Sigmoid colon (tissue), 7 donors: ENCODE measurements at regions of chr4 and their contacts with region 1.

Region 1: GRCh38 chr4:109702950-109703663 is at the start of gene CASP6:
- DNase-seq: peak; percentile 91
- H3K4me3 ChIP-seq: peak within 1 kb of the TSS; percentile 61 to 86 (median 74)
- H3K27ac ChIP-seq: peak within 1 kb of the TSS; percentile 85 to 90 (median 89)
- H3K4me1 ChIP-seq: peaks cover 0 to 20% (median 16%) of the 10 kb centered on the region in 4 donors
- H3K27me3 ChIP-seq: no peaks in the 10 kb centered on the region
- CTCF ChIP-seq: peak; percentile 35 to 78 (median 70)
- EP300 ChIP-seq: no peak
- POLR2A ChIP-seq: peak in 1 of 2 donors; percentile 55
- total RNA-seq, gene CASP6: 18.2 to 41.3 (median 26.8) TPM

Region 2: DNA sequence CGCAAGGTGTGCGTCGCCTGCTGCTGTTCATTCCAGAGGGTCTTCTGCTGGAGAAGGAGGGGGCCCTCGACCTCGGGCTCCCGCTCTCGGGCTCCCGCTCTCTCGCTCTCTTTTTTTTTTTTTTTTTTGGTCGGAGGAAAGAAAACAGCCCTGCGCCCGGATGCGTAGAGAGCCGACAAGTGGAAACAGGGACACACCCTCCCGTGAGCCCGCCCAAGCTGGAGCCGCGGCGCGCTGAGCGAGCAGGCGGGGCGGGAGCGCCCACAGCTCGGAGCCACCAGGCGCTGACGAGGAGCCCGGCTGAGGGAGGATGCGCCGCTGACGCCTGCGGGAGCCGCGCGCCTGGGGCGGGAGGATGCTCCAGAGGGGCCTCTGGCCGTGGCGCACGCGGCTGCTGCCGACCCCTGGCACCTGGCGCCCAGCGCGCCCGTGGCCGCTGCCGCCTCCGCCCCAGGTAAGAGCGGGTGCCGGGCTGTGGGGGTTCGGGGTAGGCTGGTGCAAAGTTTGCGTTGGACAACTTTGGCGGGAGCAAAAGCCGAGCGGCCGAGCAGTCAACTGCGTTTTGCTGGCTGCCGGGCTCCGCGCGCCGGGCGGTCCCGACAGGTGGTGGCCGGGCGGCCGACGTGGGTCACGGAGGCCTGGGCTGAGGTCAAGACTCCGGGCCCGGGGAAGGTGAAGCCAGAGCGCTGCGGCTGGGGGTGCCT is 143.0 kb before region 1 on chr4 and contains the start of gene MCUB:
- intact Hi-C with region 1: loop called (anchors 10 kb)
- DNase-seq: peak; percentile 93
- H3K4me3 ChIP-seq: peak within 1 kb of the TSS; percentile 51 to 81 (median 67)
- H3K27ac ChIP-seq: peak within 1 kb of the TSS; percentile 68 to 93 (median 84)
- H3K4me1 ChIP-seq: peaks cover 0 to 23% (median 17%) of the 10 kb centered on the region in 4 donors
- H3K27me3 ChIP-seq: no peaks in the 10 kb centered on the region
- CTCF ChIP-seq: no peak
- EP300 ChIP-seq: no peak
- POLR2A ChIP-seq: no peak
- total RNA-seq, gene MCUB: 5.0 to 10.9 (median 8.8) TPM

Region 3: DNA sequence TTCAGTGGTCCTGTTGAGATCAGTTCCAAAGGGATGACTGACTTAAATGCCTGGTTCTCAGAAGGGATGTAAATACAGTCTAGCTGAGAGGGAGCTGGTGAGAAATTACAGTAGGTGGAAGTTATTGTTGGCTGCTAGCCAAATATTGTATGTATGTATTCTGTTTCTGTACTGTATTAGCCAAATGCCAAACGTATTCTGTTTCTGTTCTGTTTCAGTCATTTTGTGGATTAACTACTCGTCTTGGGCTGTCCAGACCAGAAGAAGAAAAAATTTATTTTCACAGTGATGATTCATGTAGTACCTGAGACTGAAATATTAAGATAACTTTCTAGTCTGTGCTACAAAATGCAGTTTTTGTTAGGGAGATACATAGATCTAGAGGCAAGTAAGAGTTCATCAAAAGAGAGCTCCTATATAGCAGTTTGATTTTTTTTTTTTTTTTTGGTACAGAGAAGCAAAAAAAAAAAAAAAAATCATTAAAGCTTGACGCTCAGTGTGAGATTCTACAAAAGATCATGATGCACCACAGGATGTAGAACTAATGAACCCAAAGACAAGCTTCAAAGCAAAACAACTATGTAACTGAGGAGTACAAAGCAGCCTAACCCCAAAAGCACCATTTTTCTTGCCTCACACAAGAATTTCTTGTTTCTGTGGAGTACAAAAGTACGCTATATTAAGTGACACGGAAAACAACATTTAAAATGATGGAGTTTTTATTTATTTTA is 54.7 kb before region 1 on chr4:
- intact Hi-C with region 1: no loop called
- DNase-seq: no peak
- H3K4me3 ChIP-seq: no peak overlapping the region
- H3K27ac ChIP-seq: no peak overlapping the region
- H3K4me1 ChIP-seq: no peaks in the 10 kb centered on the region
- H3K27me3 ChIP-seq: no peaks in the 10 kb centered on the region
- CTCF ChIP-seq: no peak
- EP300 ChIP-seq: no peak
- POLR2A ChIP-seq: no peak

Region 4: DNA sequence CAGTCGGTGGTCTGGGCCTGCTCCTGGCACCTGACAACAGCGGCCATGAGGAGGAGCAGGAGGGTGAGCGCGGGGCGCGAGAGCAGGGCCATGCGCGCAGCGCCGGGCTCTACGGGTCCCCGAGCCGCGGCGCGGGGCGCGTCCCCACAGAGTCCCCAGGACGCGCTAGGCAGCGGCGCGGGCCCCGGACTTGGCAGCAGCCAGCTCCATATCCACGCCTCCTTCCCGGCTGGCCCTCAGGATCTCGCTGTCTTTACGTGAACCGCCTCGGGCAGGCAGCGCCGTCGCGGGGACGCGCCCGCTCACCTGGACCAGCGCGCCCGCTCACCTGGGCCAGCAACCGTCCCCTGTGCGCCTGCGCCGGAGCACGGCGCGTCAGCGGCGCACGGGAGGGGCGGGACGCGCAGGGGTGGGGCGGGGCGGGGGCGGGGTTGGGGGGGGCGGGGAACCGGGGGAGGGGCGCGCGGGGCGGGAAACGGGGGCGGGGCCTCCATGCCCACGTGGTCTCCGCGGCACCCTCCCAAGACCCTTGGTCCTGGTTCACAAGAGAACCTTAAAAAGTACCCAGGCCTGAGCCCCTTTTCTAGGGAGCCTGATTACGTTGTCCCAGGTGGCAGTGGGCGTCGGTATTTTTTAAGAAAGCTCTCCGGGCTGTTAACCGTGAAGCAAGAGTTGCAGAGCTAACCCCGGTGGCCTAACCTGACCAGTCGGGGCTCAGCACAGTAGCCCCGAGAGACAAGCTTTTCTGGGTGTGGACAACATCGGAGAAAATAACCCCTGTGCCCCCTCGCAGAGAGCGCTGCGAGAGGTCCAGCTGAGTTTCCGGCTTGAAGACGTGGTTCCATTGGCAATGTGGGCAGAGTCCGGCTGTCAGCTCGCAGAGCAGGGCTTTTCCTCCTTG is 26.9 kb after region 1 on chr4 and contains the start of gene PLA2G12A:
- intact Hi-C with region 1: loop called (anchors 2 kb)
- DNase-seq: peak; percentile 82
- H3K4me3 ChIP-seq: peak within 1 kb of the TSS; percentile 57 to 96 (median 70)
- H3K27ac ChIP-seq: peak within 1 kb of the TSS; percentile 74 to 81 (median 78)
- H3K4me1 ChIP-seq: peaks cover 0 to 17% (median 10%) of the 10 kb centered on the region in 4 donors
- H3K27me3 ChIP-seq: no peaks in the 10 kb centered on the region
- CTCF ChIP-seq: no peak
- EP300 ChIP-seq: no peak
- POLR2A ChIP-seq: no peak
- total RNA-seq, gene PLA2G12A: 18.0 to 27.7 (median 23.0) TPM

Region 5: GRCh38 chr4:109877400-109877799 is 174.3 kb after region 1 on chr4:
- intact Hi-C with region 1: no loop called
- DNase-seq: no peak
- H3K4me3 ChIP-seq: no peak overlapping the region
- H3K27ac ChIP-seq: no peak overlapping the region
- H3K4me1 ChIP-seq: no peaks in the 10 kb centered on the region
- H3K27me3 ChIP-seq: no peaks in the 10 kb centered on the region
- CTCF ChIP-seq: no peak
- EP300 ChIP-seq: no peak
- POLR2A ChIP-seq: no peak